ENCODE measurements at regions of chr22 and their contacts with region 1.

Region 1: DNA sequence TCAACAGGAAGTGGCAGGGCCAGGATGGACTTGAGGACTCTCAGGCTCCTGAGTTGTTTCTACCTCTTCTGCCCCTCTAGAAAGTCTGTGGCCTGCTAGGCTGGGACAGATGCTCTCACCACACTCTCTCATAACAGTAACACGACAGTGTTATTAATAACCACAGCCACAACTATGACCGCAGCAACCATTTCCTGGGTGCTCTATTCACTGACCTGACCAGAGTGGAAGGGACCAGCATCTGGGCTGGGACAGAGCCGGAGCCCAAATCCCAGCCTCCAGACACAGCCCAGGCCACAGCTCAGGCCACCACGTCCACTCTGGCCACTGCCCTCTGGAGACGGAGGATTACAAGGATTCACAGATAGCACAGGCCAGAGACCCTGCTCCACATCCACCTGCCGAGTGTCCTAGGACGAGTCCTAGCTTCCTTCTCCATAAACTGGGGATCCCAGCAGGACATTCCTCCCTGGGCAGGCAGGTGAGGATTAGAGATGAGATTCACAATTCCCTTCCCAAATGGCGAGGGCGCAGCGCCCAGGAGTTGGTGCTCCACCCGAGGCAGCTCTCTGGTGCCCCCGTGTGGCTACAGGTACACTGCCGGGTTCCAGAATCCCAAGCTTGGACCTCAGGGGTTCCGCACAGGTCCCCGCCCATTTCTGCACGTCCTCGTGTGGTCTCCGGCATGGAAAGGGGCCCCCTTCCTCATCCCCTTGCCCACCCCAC is 7.0 kb downstream of the PNPLA5 start:
- DNase-seq: peak; percentile 20
- ATAC-seq: peak; percentile 79
- H3K4me3 ChIP-seq: no peak overlapping the region
- H3K27ac ChIP-seq: no peak overlapping the region
- H3K4me1 ChIP-seq: no peaks in the 10 kb centered on the region
- H3K27me3 ChIP-seq: no peaks in the 10 kb centered on the region
- CTCF ChIP-seq: peak; percentile 90

Region 2: GRCh38 chr22:43745783-43746356 is 138.9 kb before region 1 on chr22:
- CTCF ChIA-PET with region 1: no interaction called
- POLR2A ChIA-PET with region 1: no interaction called
- in situ Hi-C with region 1: no loop called
- intact Hi-C with region 1: no loop called
- DNase-seq: no peak
- ATAC-seq: no peak
- H3K4me3 ChIP-seq: no peak overlapping the region
- H3K27ac ChIP-seq: no peak overlapping the region
- H3K4me1 ChIP-seq: no peaks in the 10 kb centered on the region
- H3K27me3 ChIP-seq: peaks cover 6% of the 10 kb centered on the region
- CTCF ChIP-seq: no peak

Region 3: GRCh38 chr22:43795320-43795719 is 89.4 kb before region 1 on chr22:
- CTCF ChIA-PET with region 1: no interaction called
- POLR2A ChIA-PET with region 1: interaction called, 13 read pairs
- in situ Hi-C with region 1: no loop called
- intact Hi-C with region 1: no loop called
- DNase-seq: no peak
- ATAC-seq: no peak
- H3K4me3 ChIP-seq: no peak overlapping the region
- H3K27ac ChIP-seq: no peak overlapping the region
- H3K4me1 ChIP-seq: no peaks in the 10 kb centered on the region
- H3K27me3 ChIP-seq: no peaks in the 10 kb centered on the region; the same call in none of the 2 replicates
- CTCF ChIP-seq: no peak

Region 4: DNA sequence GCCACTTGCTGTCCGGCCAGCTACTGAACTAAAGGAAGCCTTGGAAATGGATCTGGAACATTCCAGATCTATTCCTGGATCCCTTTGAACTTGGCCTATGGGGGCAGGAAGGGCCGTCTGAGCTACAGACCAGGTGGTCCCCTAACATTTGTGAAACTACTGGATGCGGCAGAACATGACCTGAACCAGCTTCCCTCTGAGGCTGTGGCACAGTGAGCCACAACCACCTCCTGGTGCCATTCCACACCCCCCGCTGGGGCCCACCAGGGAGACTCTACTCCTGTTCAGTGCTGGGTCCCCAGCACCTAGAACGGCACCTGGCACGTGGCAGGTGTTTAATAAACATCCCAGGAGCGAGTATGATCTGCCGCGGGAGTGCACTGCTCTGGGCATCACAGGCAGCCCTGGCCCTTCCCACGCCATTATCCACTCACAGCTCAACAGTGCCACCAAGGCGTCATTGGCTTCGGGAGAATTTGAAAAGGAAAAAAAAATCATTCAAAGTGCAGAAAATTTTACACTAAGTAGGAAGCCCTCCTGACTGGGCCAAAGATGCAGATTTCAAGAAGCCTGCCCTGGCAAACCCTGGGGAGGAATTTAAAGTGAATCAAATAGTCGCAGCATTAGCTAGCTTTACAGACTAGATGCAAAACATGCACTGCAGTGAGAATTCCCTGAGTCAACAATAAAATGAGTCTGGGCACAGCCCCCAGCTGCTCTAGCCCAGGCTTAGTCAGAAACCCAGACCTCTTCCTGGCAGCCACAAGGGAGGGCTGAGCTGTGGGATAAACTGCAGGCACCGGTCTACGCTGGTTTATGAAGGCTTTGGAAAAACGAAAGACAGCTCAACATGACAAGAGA is 58.4 kb before region 1 on chr22:
- CTCF ChIA-PET with region 1: no interaction called
- POLR2A ChIA-PET with region 1: no interaction called
- in situ Hi-C with region 1: no loop called
- intact Hi-C with region 1: no loop called
- DNase-seq: no peak
- ATAC-seq: no peak
- H3K4me3 ChIP-seq: no peak overlapping the region
- H3K27ac ChIP-seq: no peak overlapping the region
- H3K4me1 ChIP-seq: no peaks in the 10 kb centered on the region
- H3K27me3 ChIP-seq: no peaks in the 10 kb centered on the region
- CTCF ChIP-seq: no peak

Region 5: GRCh38 chr22:43945632-43946383 is 61.0 kb after region 1 on chr22:
- CTCF ChIA-PET with region 1: interaction called, 13 read pairs
- POLR2A ChIA-PET with region 1: no interaction called
- in situ Hi-C with region 1: no loop called
- intact Hi-C with region 1: no loop called
- DNase-seq: no peak
- ATAC-seq: peak; percentile 98
- H3K4me3 ChIP-seq: no peak overlapping the region
- H3K27ac ChIP-seq: no peak overlapping the region
- H3K4me1 ChIP-seq: no peaks in the 10 kb centered on the region
- H3K27me3 ChIP-seq: no peaks in the 10 kb centered on the region
- CTCF ChIP-seq: peak; percentile 84

Region 6: GRCh38 chr22:44026630-44027511 is 142.1 kb after region 1 on chr22:
- CTCF ChIA-PET with region 1: no interaction called
- POLR2A ChIA-PET with region 1: no interaction called
- in situ Hi-C with region 1: no loop called
- intact Hi-C with region 1: no loop called
- DNase-seq: peak; percentile 38
- ATAC-seq: peak; percentile 54
- H3K4me3 ChIP-seq: peak overlapping the region; percentile 49 to 58
- H3K27ac ChIP-seq: peak overlapping the region; percentile 83
- H3K4me1 ChIP-seq: peaks cover 15% of the 10 kb centered on the region
- H3K27me3 ChIP-seq: no peaks in the 10 kb centered on the region
- CTCF ChIP-seq: no peak

Measured in Panc1 (cell line).